A549 (cell line): ENCODE measurements at regions of chr6 and their contacts with region 1.

Region 1: DNA sequence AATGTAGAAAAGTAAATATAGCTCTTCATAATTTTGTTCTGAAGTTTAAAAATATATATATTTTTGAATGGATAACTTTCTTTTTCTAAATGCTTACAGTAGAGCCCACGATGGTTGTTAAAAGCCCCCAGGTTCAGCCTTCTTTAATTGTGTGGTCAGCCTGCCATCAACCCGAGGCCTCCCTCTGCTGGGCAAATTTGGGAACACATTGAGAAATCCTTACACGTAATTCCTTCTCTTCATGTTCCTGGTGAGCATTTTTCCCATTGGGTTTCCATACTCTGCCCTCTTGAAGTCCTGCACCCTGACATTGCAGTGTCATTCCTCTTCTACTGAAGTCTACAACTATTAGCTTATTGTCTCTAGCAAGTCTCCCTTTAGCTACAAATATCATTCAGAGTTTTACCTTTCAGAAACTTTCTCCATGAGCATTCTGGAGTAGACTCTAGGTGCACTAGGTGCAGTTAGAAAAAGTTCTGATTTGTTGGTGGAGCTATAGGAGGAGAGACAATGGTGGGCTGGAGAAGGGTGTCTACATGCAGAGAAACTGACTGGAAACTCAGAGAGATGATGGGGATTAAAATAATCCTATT is 40.6 kb downstream of the TRIM38 start:
- DNase-seq: peak; percentile 46 to 62
- ATAC-seq: peak; percentile 76 to 82; a peak in 5 of 6 replicates
- H3K4me3 ChIP-seq: no peak overlapping the region
- H3K27ac ChIP-seq: no peak overlapping the region
- H3K4me1 ChIP-seq: no peaks in the 10 kb centered on the region
- CTCF ChIP-seq: peak; percentile 59
- EP300 ChIP-seq: no peak
- POLR2A ChIP-seq: no peak
- RAD21 ChIP-seq: peak; percentile 46 to 61

Region 2: GRCh38 chr6:25992413-25993037 is 10.7 kb before region 1 on chr6:
- CTCF ChIA-PET with region 1: interaction called, 72 read pairs
- POLR2A ChIA-PET with region 1: interaction called, 3 read pairs
- DNase-seq: peak; percentile 68 to 90
- ATAC-seq: peak; percentile 93 to 94
- H3K4me3 ChIP-seq: peak overlapping the region; percentile 52
- H3K27ac ChIP-seq: peak overlapping the region; percentile 93 to 95
- H3K4me1 ChIP-seq: peaks cover 11% of the 10 kb centered on the region
- CTCF ChIP-seq: peak; percentile 94
- EP300 ChIP-seq: no peak
- POLR2A ChIP-seq: peak; percentile 90
- RAD21 ChIP-seq: peak; percentile 32 to 61; a peak in 4 of 5 replicates

Region 3: GRCh38 chr6:26659042-26659999 is 656.1 kb after region 1 on chr6 and contains the start of gene ZNF322:
- CTCF ChIA-PET with region 1: no interaction called
- POLR2A ChIA-PET with region 1: no interaction called
- DNase-seq: peak; percentile 86 to 90
- ATAC-seq: peak; percentile 97 to 100
- H3K4me3 ChIP-seq: peak within 1 kb of the TSS; percentile 65
- H3K27ac ChIP-seq: peak within 1 kb of the TSS; percentile 85
- H3K4me1 ChIP-seq: 0 out of 3 replicates have a peak, but pooled peaks cover 3% of the 10 kb centered on the region
- CTCF ChIP-seq: no peak
- EP300 ChIP-seq: no peak
- POLR2A ChIP-seq: peak; percentile 55
- RAD21 ChIP-seq: no peak
- polyA plus RNA-seq, gene ZNF322: 12.3 and 14.5 TPM in 2 replicates

Region 4: DNA sequence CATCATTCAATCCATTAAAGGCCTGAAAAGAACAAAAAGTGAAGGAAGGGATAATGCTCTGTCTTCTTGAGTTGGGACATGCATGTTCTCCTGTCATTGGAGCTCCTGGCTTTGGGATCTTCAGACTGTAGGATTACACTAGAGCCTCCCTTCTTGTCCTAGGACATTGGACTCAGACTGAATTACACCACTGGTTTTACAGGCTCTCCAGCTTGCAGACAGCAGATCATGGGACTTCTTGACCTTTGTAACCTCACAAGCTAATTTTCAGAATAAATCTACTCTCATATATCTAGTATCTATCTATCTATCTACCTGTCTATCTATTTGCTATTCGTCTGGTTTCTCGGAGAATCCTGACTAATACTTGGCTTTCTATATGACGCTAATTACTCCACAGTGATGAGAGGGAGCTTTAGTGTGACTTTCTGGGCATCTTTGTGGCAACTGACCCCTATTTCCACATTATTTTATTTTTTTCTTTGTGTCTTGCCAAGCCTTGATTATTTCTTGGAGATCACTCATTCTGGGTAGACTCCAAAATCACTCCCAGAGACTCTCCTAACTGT is 1621.6 kb after region 1 on chr6:
- CTCF ChIA-PET with region 1: no interaction called
- POLR2A ChIA-PET with region 1: no interaction called
- DNase-seq: no peak
- ATAC-seq: no peak
- H3K4me3 ChIP-seq: no peak overlapping the region
- H3K27ac ChIP-seq: no peak overlapping the region
- H3K4me1 ChIP-seq: peaks cover under 1% of the 10 kb centered on the region; the same call in 1 of the 3 replicates
- CTCF ChIP-seq: no peak
- EP300 ChIP-seq: no peak
- POLR2A ChIP-seq: no peak
- RAD21 ChIP-seq: no peak